Left cardiac atrium (tissue), 4 donors: ENCODE measurements at regions of chr16 and their contacts with region 1.

Region 1: GRCh38 chr16:29995911-29996772 is at the start of gene INO80E:
- DNase-seq: peak; percentile 99
- ATAC-seq: peak; percentile 98 to 99
- total RNA-seq, gene INO80E: 33.6 to 35.9 TPM

Region 2: DNA sequence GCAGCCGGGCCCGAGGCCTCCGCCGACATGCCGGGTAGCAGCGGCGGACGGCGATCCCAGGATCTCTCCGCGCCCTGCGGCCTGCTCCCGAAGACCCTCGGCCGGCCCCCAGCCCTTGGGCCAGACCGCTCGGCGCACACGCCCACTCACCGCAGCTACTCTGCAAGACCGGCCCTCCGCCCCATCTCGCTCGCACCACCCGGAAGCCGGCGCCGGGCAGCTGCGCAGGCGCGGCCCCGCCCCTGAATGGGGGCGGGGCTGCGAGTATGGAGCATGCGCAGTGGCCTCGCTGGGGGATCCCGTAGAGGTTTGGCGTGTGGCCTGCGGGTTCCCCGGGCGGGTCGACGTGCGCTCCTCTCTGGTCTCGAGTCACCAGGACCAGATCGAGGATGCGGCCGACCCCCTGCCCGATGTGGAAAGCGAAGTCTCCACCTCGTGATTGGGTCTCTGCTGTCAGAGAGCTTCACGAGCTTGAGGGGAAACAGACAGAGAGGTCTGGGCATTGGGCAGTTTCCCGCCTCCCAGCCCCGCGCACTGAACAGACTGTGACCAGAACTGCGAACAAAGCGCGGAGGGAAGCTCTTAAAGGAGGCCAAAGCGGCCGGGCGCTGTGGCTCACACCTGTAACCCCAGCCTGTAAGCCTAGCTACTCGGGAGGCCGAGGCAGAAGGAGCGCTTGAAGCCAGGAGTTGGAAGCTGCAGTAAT is 70.0 kb before region 1 on chr16 and contains the start of gene KCTD13:
- intact Hi-C with region 1: loop called in 1 of 2 experiments (anchors 10 kb)
- DNase-seq: peak; percentile 85
- ATAC-seq: peak; percentile 99
- total RNA-seq, gene KCTD13: 7.6 to 10.1 TPM

Region 3: DNA sequence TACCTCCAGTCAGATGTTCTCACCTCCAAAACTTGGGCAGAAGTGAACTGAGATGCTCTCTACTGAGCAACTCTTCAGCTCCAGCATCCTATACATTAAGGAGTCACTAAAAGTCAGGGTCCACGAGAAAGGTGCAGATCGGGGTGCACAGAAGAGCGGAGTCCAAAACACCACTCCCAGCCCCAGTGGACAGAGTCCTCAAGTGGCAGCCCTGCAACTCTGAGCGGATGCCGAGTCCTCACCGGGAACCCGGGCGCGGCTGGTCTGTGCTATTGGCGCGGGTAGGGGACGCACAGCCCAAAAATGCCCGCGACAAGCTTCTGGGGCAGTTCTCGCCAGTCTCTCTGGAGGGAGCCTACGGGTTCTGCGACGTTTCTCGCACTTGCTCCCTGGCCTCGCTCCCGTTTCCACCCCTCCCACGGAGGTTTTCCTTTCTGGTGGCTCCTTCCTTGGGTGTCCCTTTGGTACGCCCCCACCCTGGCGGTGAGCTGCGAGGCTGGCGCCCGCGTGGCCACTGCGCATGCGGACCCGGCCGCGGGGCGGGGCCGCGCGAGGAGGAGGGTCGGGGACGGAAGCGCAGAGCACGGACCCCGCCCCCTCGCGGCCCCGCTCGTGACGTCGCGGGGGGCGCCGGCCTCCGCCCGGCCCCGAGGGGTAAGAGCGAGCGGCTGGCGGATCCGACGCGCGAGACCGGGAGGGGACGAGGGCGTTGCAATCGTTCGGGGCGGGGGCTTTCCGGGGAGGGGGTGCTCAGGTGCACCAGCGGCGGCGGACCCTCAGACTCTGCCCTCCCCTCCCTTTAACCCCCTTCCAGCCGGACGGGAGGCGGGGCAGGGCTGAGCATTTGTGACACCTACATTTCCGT is 34.4 kb before region 1 on chr16 and contains the start of gene TMEM219:
- intact Hi-C with region 1: loop called in 1 of 2 experiments (anchors 2 kb)
- DNase-seq: peak; percentile 92
- ATAC-seq: peak; percentile 98
- total RNA-seq, gene TMEM219: 73.8 to 78.8 TPM